ENCODE measurements at regions of chr18 and their contacts with region 1.

Region 1: GRCh38 chr18:35786365-35787042 is 186.0 kb upstream of the RMP24 start:
- DNase-seq: no peak
- ATAC-seq: no peak
- H3K4me3 ChIP-seq: no peak overlapping the region
- H3K27ac ChIP-seq: no peak overlapping the region
- H3K4me1 ChIP-seq: no peaks in the 10 kb centered on the region
- H3K27me3 ChIP-seq: peaks cover 0 to 3% (median 0%) of the 10 kb centered on the region in 9 donors
- CTCF ChIP-seq: no peak
- POLR2A ChIP-seq: no peak

Region 2: GRCh38 chr18:35842536-35842935 is 56.0 kb after region 1 on chr18:
- intact Hi-C with region 1: loop called in 1 of 10 experiments (anchors 10 kb)
- DNase-seq: no peak
- ATAC-seq: no peak
- H3K4me3 ChIP-seq: no peak overlapping the region
- H3K27ac ChIP-seq: no peak overlapping the region
- H3K4me1 ChIP-seq: no peaks in the 10 kb centered on the region
- H3K27me3 ChIP-seq: no peaks in the 10 kb centered on the region
- CTCF ChIP-seq: no peak
- POLR2A ChIP-seq: no peak

Region 3: DNA sequence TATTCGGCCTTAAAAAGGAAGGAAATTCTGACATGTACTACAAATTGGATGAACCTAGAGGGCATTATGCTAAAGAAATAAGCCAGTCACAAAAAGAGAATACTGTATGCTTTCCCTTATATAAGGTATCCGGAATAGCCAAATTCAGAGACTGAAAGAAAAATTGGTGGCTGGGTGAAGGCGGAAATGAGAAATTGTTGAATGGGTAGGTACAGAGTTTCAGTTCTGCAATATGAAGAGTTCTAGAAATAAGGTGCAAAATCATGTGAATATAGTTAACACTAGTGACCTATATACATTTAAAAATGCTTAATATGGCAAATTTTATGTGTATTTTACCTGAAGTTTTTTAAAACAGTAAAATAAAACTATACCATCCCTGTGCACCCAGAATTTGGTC is 229.1 kb after region 1 on chr18:
- intact Hi-C with region 1: no loop called
- DNase-seq: no peak
- ATAC-seq: no peak
- H3K4me3 ChIP-seq: no peak overlapping the region
- H3K27ac ChIP-seq: no peak overlapping the region
- H3K4me1 ChIP-seq: peaks cover 0 to 8% (median 0%) of the 10 kb centered on the region in 12 donors
- H3K27me3 ChIP-seq: no peaks in the 10 kb centered on the region
- CTCF ChIP-seq: no peak
- POLR2A ChIP-seq: no peak